ENCODE measurements at regions of chr4 and their contacts with region 1.

Region 1: GRCh38 chr4:88523325-88524129 is at the start of gene PYURF:
- DNase-seq: peak; percentile 92
- H3K4me3 ChIP-seq: peak within 1 kb of the TSS; percentile 92 to 99 (median 94)
- H3K27ac ChIP-seq: peak within 1 kb of the TSS; percentile 78
- H3K4me1 ChIP-seq: peaks cover 11% of the 10 kb centered on the region
- H3K27me3 ChIP-seq: no peaks in the 10 kb centered on the region
- CTCF ChIP-seq: peak in 1 of 2 donors; percentile 8
- total RNA-seq, gene PYURF: 48.7 to 65.1 TPM

Region 2: GRCh38 chr4:88591787-88592599 is 68.5 kb after region 1 on chr4 and contains the start of gene HERC3:
- CTCF ChIA-PET with region 1: no interaction called
- dilution Hi-C with region 1: no loop called
- in situ Hi-C with region 1: no loop called
- intact Hi-C with region 1: no loop called
- DNase-seq: peak; percentile 87
- H3K4me3 ChIP-seq: peak within 1 kb of the TSS; percentile 77 to 90 (median 81)
- H3K27ac ChIP-seq: peak within 1 kb of the TSS; percentile 87
- H3K4me1 ChIP-seq: peaks cover 13% of the 10 kb centered on the region
- H3K27me3 ChIP-seq: no peaks in the 10 kb centered on the region
- CTCF ChIP-seq: no peak
- total RNA-seq, gene HERC3: 14.0 to 36.5 TPM

Region 3: GRCh38 chr4:88803600-88804096 is 280.1 kb after region 1 on chr4:
- CTCF ChIA-PET with region 1: no interaction called
- dilution Hi-C with region 1: no loop called
- in situ Hi-C with region 1: loop called (anchors 10 to 25 kb)
- intact Hi-C with region 1: no loop called
- DNase-seq: peak; percentile 82
- H3K4me3 ChIP-seq: no peak overlapping the region
- H3K27ac ChIP-seq: no peak overlapping the region
- H3K4me1 ChIP-seq: peaks cover 6% of the 10 kb centered on the region
- H3K27me3 ChIP-seq: no peaks in the 10 kb centered on the region
- CTCF ChIP-seq: no peak

Region 4: DNA sequence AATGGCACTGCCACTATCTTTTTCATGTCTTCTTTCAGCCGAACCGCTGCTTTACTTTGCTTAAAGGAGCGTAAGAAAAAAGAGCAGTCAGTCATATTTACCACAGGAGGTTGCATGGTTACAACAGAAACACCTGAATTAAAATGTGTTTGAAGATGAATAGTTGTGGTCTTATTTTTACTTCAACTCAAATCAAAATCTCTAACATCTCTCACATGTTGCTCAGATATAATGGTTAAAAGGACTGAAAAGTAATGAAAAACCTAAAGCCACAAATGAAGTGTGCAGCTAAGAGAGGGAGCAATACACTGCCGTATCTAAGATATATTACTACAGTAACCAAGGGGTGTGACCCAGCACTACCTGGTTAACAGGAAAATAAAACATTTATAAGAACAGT is 506.1 kb after region 1 on chr4:
- CTCF ChIA-PET with region 1: no interaction called
- dilution Hi-C with region 1: no loop called
- in situ Hi-C with region 1: loop called in 1 of 2 experiments (anchors 25 kb)
- intact Hi-C with region 1: loop called (anchors 2 kb)
- DNase-seq: no peak
- H3K4me3 ChIP-seq: no peak overlapping the region
- H3K27ac ChIP-seq: no peak overlapping the region
- H3K4me1 ChIP-seq: no peaks in the 10 kb centered on the region
- H3K27me3 ChIP-seq: no peaks in the 10 kb centered on the region
- CTCF ChIP-seq: no peak

Measured in mammary epithelial cell (primary cell).